Posterior vena cava (tissue), 2 donors: ENCODE measurements at regions of chr14 and their contacts with region 1.

Region 1: GRCh38 chr14:25602106-25602505 is 552.2 kb upstream of the STXBP6 start:
- DNase-seq: no peak

Region 2: DNA sequence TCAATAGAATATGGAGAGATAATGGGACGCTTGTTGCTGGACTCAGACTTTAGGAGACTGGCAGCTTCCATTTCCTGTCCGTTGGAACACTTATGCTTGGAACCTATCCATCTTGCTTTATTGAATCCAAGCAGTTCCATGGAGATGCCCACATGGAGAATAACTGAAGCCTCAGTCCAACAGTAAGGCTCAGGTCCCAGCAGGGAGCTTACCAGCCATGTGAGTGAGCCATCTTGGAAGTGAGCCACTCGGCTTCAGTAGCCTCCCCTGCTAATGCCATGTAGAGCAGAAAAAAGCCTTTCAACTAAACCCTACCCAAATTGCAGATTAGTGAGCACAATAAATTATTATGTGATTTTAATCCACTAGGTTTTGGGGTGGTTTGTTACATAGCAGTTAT is 13.4 kb before region 1 on chr14:
- intact Hi-C with region 1: no loop called
- DNase-seq: no peak

Region 3: GRCh38 chr14:25896777-25897176 is 294.7 kb after region 1 on chr14:
- intact Hi-C with region 1: loop called in 1 of 2 experiments (anchors 5 kb)
- DNase-seq: no peak